ENCODE measurements at regions of chr22 and their contacts with region 1.

Region 1: GRCh38 chr22:44669561-44669976 is 32.4 kb upstream of the PRR5 start:
- DNase-seq: no peak
- H3K4me3 Mint-ChIP-seq: peak overlapping the region; percentile 78
- H3K27ac Mint-ChIP-seq: peak overlapping the region; percentile 81
- H3K4me1 Mint-ChIP-seq: peaks cover 64% of the 10 kb centered on the region
- H3K27me3 Mint-ChIP-seq: peaks cover 24% of the 10 kb centered on the region

Region 2: GRCh38 chr22:44625981-44626687 is 43.4 kb before region 1 on chr22:
- CTCF ChIA-PET with region 1: interaction called, 10 read pairs
- DNase-seq: peak; percentile 85
- H3K4me3 Mint-ChIP-seq: no peak overlapping the region
- H3K27ac Mint-ChIP-seq: no peak overlapping the region
- H3K4me1 Mint-ChIP-seq: peaks cover 4% of the 10 kb centered on the region
- H3K27me3 Mint-ChIP-seq: peaks cover 36% of the 10 kb centered on the region

Region 3: DNA sequence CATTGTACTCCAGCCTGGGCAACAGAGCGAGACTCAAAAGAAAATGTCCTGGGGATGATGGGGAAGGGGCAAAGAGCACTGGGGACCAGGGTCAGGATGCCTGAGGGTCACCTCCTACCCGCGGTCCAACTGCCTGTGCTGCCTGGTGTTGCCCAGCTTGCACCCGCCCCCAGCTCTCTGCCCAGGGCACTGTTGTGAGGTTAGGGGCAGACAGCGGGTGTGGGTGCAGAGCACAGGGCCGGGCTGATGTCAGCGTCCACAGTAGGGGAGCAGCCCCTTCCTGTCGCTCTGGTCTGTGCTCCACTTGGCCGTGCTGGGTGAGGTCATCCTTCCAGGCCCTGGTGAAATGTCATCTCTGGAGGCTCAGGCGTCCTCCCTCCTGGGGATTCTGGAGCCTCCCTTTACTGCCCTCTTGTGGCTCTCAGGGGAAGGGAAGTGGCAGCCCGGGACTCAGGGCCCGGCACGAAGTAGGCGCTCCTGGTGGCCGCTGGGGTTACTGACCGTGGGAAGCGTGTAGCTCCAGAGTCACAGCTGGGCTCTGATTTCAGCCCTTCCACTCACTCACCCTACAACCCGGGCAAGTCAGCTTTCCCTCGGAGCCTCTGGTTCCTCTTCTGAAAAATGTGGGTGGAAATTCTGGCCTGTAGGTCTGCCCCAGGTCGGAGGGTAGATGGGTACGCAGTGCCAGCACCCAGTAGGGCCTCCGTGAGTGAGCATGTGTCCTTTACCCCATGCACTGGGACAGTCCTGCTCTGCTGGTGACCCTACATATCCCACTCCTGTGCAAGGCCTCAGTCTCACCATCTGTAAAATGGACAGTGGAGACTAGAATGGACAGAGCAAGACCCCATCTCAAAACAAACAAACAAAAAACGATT is 15.2 kb after region 1 on chr22:
- CTCF ChIA-PET with region 1: interaction called, 19 read pairs
- DNase-seq: peak; percentile 91
- H3K4me3 Mint-ChIP-seq: no peak overlapping the region
- H3K27ac Mint-ChIP-seq: peak overlapping the region; percentile 82
- H3K4me1 Mint-ChIP-seq: peaks cover 66% of the 10 kb centered on the region
- H3K27me3 Mint-ChIP-seq: peaks cover 11% of the 10 kb centered on the region

Measured in activated naive CD4-positive, alpha-beta T cell treated with anti-CD3 and anti-CD28 coated beads, Interleukin-2, amount 10 ng/mL, durations not matched to agents 7 days and 5 days (primary cell).